ENCODE measurements at regions of chr11 and their contacts with region 1.

Region 1: DNA sequence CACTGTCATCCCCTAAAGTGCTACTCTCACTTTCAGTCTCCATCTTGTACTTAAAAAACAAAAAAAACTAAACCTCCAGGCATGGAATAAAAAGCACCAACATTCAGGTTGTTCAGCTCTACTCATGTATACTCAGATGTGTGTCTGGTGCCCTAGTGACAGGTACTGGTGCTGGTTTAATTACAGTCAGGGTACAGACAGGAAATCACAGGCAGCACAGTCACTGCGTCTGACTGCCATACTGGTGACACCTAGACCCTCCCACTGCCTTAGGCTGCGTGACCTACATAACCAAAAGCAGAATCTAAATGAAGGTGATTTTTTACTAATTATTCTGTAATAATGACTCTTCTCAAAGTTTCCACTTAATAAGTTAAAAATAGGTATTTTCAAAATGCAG is at the start of gene ARHGAP32:
- DNase-seq: peak; percentile 44
- H3K4me3 Mint-ChIP-seq: no peak within 1 kb of the TSS
- H3K27ac Mint-ChIP-seq: no peak within 1 kb of the TSS
- H3K4me1 Mint-ChIP-seq: no peaks in the 10 kb centered on the region
- H3K27me3 Mint-ChIP-seq: no peaks in the 10 kb centered on the region
- CTCF ChIP-seq: no peak
- total RNA-seq, gene ARHGAP32: 40.1 and 46.0 TPM in 2 replicates

Region 2: GRCh38 chr11:129143335-129143734 is 48.8 kb before region 1 on chr11:
- CTCF ChIA-PET with region 1: no interaction called
- intact Hi-C with region 1: loop called (anchors 2 kb)
- DNase-seq: peak; percentile 89
- H3K4me3 Mint-ChIP-seq: peak overlapping the region; percentile 57
- H3K27ac Mint-ChIP-seq: peak overlapping the region; percentile 99
- H3K4me1 Mint-ChIP-seq: peaks cover 25% of the 10 kb centered on the region
- H3K27me3 Mint-ChIP-seq: no peaks in the 10 kb centered on the region
- CTCF ChIP-seq: no peak

Measured in Calu3 (cell line).